Activated CD4-positive, alpha-beta memory T cell treated with anti-CD3 and anti-CD28 coated beads for 36 hours (primary cell): ENCODE measurements at regions of chr17 and their contacts with region 1.

Region 1: GRCh38 chr17:28743225-28744103 is at the start of gene TRAF4:
- DNase-seq: peak; percentile 83
- H3K4me3 Mint-ChIP-seq: peak within 1 kb of the TSS; percentile 90
- H3K27ac Mint-ChIP-seq: peak within 1 kb of the TSS; percentile 89
- H3K4me1 Mint-ChIP-seq: peaks cover 32% of the 10 kb centered on the region
- H3K27me3 Mint-ChIP-seq: no peaks in the 10 kb centered on the region
- total RNA-seq, gene TRAF4: 83.0 to 83.9 TPM

Region 2: DNA sequence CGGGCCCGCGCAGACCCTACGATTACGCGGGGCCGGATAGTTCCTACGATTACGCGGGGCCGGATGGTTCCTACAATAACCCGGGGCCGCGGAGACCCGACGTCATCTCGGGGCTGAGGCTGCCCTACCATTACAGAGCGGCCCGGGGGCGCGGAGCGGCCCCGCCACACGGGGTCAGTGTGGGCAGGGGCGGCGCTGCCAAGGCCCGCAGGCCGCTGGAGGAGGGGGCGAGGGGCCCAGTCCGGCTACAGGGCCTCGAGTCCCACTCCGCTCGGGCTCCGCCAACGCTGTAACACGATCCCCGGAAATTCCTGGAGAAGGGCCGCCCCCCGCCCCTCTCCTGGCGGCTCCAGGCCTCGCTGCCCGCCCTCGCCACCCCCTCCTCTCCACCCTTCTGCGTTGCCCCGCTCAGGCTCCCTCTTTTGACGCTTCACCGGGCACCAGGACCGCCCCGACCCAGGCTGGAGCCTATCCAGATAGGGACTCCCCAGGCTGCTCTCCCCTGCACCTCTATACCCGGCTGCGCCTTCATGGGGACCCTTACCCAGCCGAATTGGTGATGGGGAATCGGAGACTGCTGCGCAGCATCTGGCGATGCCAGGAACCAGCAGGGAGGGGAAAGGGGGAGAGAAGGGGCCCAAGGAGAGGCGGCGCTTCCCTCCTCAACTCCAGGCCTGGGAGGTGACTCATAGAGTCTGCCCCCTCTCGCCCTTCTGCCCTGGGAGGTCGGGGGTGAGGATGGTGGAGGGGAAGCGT is 25.7 kb before region 1 on chr17 and contains the start of gene RAB34:
- CTCF ChIA-PET with region 1: interaction called, 632 read pairs
- POLR2A ChIA-PET with region 1: interaction called, 202 read pairs
- intact Hi-C with region 1: no loop called
- DNase-seq: peak; percentile 20
- H3K4me3 Mint-ChIP-seq: peak within 1 kb of the TSS; percentile 14
- H3K27ac Mint-ChIP-seq: peak within 1 kb of the TSS; percentile 71
- H3K4me1 Mint-ChIP-seq: peaks cover 30% of the 10 kb centered on the region
- H3K27me3 Mint-ChIP-seq: peaks cover 16% of the 10 kb centered on the region
- total RNA-seq, gene RAB34: 4.9 to 6.6 TPM